ENCODE measurements at regions of chr19 and their contacts with region 1.

Region 1: GRCh38 chr19:8005534-8006256 is at the start of gene ELAVL1:
- DNase-seq: peak; percentile 88
- H3K4me3 Mint-ChIP-seq: peak within 1 kb of the TSS; percentile 98
- H3K27ac Mint-ChIP-seq: peak within 1 kb of the TSS; percentile 88
- H3K4me1 Mint-ChIP-seq: peaks cover 30% of the 10 kb centered on the region
- H3K27me3 Mint-ChIP-seq: no peaks in the 10 kb centered on the region
- total RNA-seq, gene ELAVL1: 184 TPM in 2 replicates

Region 2: GRCh38 chr19:7943444-7944176 is 62.1 kb before region 1 on chr19 and contains the start of gene TIMM44:
- intact Hi-C with region 1: loop called (anchors 1 kb)
- DNase-seq: peak; percentile 99
- H3K4me3 Mint-ChIP-seq: peak within 1 kb of the TSS; percentile 84
- H3K27ac Mint-ChIP-seq: peak within 1 kb of the TSS; percentile 93
- H3K4me1 Mint-ChIP-seq: peaks cover 15% of the 10 kb centered on the region
- H3K27me3 Mint-ChIP-seq: no peaks in the 10 kb centered on the region
- total RNA-seq, gene TIMM44: 79.2 and 90.2 TPM in 2 replicates

Region 3: DNA sequence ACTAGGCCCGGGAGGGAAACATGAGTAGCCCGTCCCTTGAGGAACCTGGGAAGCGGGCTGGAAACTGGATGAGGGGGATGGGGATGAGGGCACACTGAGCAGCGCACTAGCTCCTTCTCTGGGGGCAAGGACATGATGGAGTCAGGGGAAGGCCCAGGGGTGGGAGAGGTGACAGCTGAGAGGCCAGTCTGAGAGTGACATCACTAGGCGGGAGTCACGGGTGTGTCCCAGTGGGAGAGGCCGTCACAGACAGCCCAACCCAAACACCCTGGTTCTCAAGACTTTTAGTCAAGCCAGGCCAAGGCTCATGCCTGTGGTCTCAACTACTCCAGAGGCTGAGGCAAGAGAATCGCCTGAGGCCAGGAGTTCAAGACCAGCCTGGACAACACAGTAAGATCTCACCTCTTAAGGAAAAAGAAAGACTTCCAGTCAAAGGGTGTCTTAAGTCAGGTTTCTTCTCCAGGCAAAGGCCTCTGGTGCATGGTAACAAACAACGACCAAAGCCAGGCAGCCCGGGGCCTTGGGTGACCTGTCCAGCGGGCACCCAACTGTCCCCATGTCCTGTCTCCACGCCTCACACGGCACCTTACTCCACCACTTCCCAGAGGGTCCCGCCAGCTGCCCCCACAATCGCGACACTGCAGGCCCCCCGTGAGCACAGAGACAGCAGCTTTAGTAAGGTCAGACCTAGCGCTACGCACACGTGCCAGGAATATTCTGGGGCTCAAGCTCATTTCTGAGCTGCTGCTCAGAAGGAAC is 36.7 kb before region 1 on chr19:
- intact Hi-C with region 1: no loop called
- DNase-seq: no peak
- H3K4me3 Mint-ChIP-seq: no peak overlapping the region
- H3K27ac Mint-ChIP-seq: no peak overlapping the region
- H3K4me1 Mint-ChIP-seq: no peaks in the 10 kb centered on the region
- H3K27me3 Mint-ChIP-seq: no peaks in the 10 kb centered on the region

Region 4: GRCh38 chr19:8321060-8321985 is 315.6 kb after region 1 on chr19 and contains the starts of genes NDUFA7 and RPS28:
- intact Hi-C with region 1: loop called (anchors 5 kb)
- DNase-seq: peak; percentile 96
- H3K4me3 Mint-ChIP-seq: peak within 1 kb of the TSS; percentile 99
- H3K27ac Mint-ChIP-seq: peak within 1 kb of the TSS; percentile 98
- H3K4me1 Mint-ChIP-seq: peaks cover 12% of the 10 kb centered on the region
- H3K27me3 Mint-ChIP-seq: no peaks in the 10 kb centered on the region
- total RNA-seq, gene NDUFA7: 48.6 and 54.5 TPM in 2 replicates
- total RNA-seq, gene RPS28: 1,945 and 1,967 TPM in 2 replicates

Measured in activated T-helper 2 cell treated with anti-CD3 and anti-CD28 coated beads, Interferon-gamma antibody, Interleukin-2, Interleukin-4, amounts not matched to agents 10 μg/mL and 5 μg/mL and 100 μg/mL, durations not matched to agents 14 hours and 24 hours and 36 hours (primary cell).